T-cell (primary cell): ENCODE measurements at regions of chr11 and their contacts with region 1.

Region 1: DNA sequence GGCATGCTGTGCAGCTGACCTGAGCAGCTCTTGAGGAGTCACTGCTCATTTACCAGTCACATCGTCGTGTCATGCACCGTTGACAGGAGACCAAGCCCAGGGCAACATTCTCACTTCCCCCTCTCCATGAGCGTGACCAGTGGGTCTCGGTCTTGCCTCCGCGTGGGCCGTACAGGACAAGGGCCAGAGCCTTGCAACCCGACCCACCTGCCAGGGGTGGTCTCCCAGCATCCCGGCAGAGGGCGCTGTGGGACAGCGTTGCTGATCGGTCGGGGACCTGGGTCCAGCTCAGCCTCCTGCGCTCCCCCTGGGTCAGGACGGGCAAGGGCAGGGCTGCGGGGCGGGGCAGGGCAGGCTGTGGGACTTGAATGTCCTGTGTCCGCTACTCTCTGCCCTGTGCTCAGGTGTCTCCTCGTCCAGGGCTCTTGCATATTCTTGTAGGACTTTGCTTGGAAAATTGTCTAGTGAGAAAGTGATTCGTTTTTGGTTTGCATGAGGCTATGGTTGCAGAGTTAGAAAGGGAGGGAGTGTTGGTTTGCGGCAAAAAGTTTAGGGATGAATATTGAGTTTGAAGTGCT is 16.2 kb downstream of the EIF4G2 start:
- DNase-seq: peak; percentile 46 to 87 (median 75)
- ATAC-seq: peak; percentile 74 to 91 (median 86)
- H3K4me3 ChIP-seq: no peak overlapping the region
- H3K4me3 Mint-ChIP-seq: peak overlapping the region in 1 of 3 donors; percentile 20
- H3K27ac ChIP-seq: no peak overlapping the region
- H3K27ac Mint-ChIP-seq: no peak overlapping the region
- H3K4me1 ChIP-seq: peaks cover 0 to 20% of the 10 kb centered on the region in 2 experiments
- H3K4me1 Mint-ChIP-seq: peaks cover 23 to 30% (median 28%) of the 10 kb centered on the region in 3 donors
- H3K27me3 ChIP-seq: peaks cover 0 to 11% of the 10 kb centered on the region in 2 experiments
- H3K27me3 Mint-ChIP-seq: peaks cover 0 to 4% of the 10 kb centered on the region in 2 donors

Region 2: GRCh38 chr11:10770626-10771254 is 21.7 kb before region 1 on chr11:
- CTCF ChIA-PET with region 1: interaction called, 10 read pairs
- POLR2A ChIA-PET with region 1: no interaction called
- DNase-seq: peak in 11 of 35 experiments; percentile 5 to 45 (median 17)
- ATAC-seq: no peak
- H3K4me3 ChIP-seq: no peak overlapping the region
- H3K4me3 Mint-ChIP-seq: no peak overlapping the region
- H3K27ac ChIP-seq: no peak overlapping the region
- H3K27ac Mint-ChIP-seq: peak overlapping the region in 1 of 2 donors; percentile 48
- H3K4me1 ChIP-seq: no peaks in the 10 kb centered on the region
- H3K4me1 Mint-ChIP-seq: no peaks in the 10 kb centered on the region
- H3K27me3 ChIP-seq: no peaks in the 10 kb centered on the region
- H3K27me3 Mint-ChIP-seq: no peaks in the 10 kb centered on the region

Region 3: DNA sequence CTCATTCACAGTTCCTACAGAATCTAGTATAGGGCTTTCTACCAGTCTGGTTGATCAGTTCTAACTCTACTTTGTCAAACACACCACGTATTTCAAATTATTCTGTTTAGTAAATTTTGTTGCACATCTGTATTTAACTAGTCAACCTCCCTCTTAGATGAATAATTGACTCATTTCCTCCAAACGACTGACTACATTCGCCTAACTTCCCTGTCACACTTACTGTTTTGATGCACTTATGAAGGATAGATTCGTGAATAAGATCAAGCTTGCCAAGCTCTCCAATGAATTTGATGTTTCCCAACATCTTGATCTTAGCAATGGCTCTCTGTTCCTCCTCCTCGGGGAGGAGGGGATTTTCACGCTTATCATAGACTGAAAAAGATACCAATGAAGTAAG is 11.2 kb after region 1 on chr11:
- CTCF ChIA-PET with region 1: interaction called, 4 to 27 read pairs
- POLR2A ChIA-PET with region 1: interaction called, 30 to 57 read pairs
- DNase-seq: no peak
- ATAC-seq: no peak
- H3K4me3 ChIP-seq: no peak overlapping the region
- H3K4me3 Mint-ChIP-seq: peak overlapping the region in 2 of 3 donors; percentile 2 to 91
- H3K27ac ChIP-seq: no peak overlapping the region
- H3K27ac Mint-ChIP-seq: peak overlapping the region; percentile 25 to 29
- H3K4me1 ChIP-seq: peaks cover 34 to 44% of the 10 kb centered on the region in 2 experiments
- H3K4me1 Mint-ChIP-seq: peaks cover 79 to 85% (median 85%) of the 10 kb centered on the region in 3 donors
- H3K27me3 ChIP-seq: no peaks in the 10 kb centered on the region
- H3K27me3 Mint-ChIP-seq: no peaks in the 10 kb centered on the region

Region 4: GRCh38 chr11:10906513-10906912 is 114.0 kb after region 1 on chr11:
- CTCF ChIA-PET with region 1: interaction called, 5 to 10 read pairs
- POLR2A ChIA-PET with region 1: interaction called in 1 of 2 experiments, 4 read pairs
- DNase-seq: no peak
- ATAC-seq: no peak
- H3K4me3 ChIP-seq: no peak overlapping the region
- H3K4me3 Mint-ChIP-seq: no peak overlapping the region
- H3K27ac ChIP-seq: no peak overlapping the region
- H3K27ac Mint-ChIP-seq: no peak overlapping the region
- H3K4me1 ChIP-seq: no peaks in the 10 kb centered on the region
- H3K4me1 Mint-ChIP-seq: no peaks in the 10 kb centered on the region
- H3K27me3 ChIP-seq: peaks cover 0 to 7% of the 10 kb centered on the region in 2 experiments
- H3K27me3 Mint-ChIP-seq: peaks cover 8 to 14% of the 10 kb centered on the region in 2 donors

Region 5: GRCh38 chr11:11022125-11022730 is 229.7 kb after region 1 on chr11:
- CTCF ChIA-PET with region 1: interaction called, 5 to 18 read pairs
- POLR2A ChIA-PET with region 1: interaction called in 1 of 2 experiments, 3 read pairs
- DNase-seq: peak in 6 of 35 experiments; percentile 5 to 62 (median 10)
- ATAC-seq: peak in 1 of 4 experiments; percentile 55
- H3K4me3 ChIP-seq: no peak overlapping the region
- H3K4me3 Mint-ChIP-seq: no peak overlapping the region
- H3K27ac ChIP-seq: no peak overlapping the region
- H3K27ac Mint-ChIP-seq: no peak overlapping the region
- H3K4me1 ChIP-seq: no peaks in the 10 kb centered on the region
- H3K4me1 Mint-ChIP-seq: no peaks in the 10 kb centered on the region
- H3K27me3 ChIP-seq: no peaks in the 10 kb centered on the region
- H3K27me3 Mint-ChIP-seq: peaks cover 0 to 4% of the 10 kb centered on the region in 2 donors

Region 6: GRCh38 chr11:11135820-11136465 is 343.5 kb after region 1 on chr11:
- CTCF ChIA-PET with region 1: no interaction called
- POLR2A ChIA-PET with region 1: interaction called in 1 of 2 experiments, 13 read pairs
- DNase-seq: no peak
- ATAC-seq: no peak
- H3K4me3 ChIP-seq: no peak overlapping the region
- H3K4me3 Mint-ChIP-seq: no peak overlapping the region
- H3K27ac ChIP-seq: no peak overlapping the region
- H3K27ac Mint-ChIP-seq: no peak overlapping the region
- H3K4me1 ChIP-seq: peaks cover 6 to 8% of the 10 kb centered on the region in 2 experiments
- H3K4me1 Mint-ChIP-seq: peaks cover 21 to 25% (median 24%) of the 10 kb centered on the region in 3 donors
- H3K27me3 ChIP-seq: no peaks in the 10 kb centered on the region
- H3K27me3 Mint-ChIP-seq: peaks cover 0 to 5% of the 10 kb centered on the region in 2 donors

Region 7: GRCh38 chr11:11735586-11735985 is 943.1 kb after region 1 on chr11:
- CTCF ChIA-PET with region 1: no interaction called
- POLR2A ChIA-PET with region 1: no interaction called
- DNase-seq: no peak
- ATAC-seq: no peak
- H3K4me3 ChIP-seq: no peak overlapping the region
- H3K4me3 Mint-ChIP-seq: no peak overlapping the region
- H3K27ac ChIP-seq: no peak overlapping the region
- H3K27ac Mint-ChIP-seq: no peak overlapping the region
- H3K4me1 ChIP-seq: no peaks in the 10 kb centered on the region
- H3K4me1 Mint-ChIP-seq: no peaks in the 10 kb centered on the region
- H3K27me3 ChIP-seq: peaks cover 0 to 10% of the 10 kb centered on the region in 2 experiments
- H3K27me3 Mint-ChIP-seq: peaks cover 17 to 22% of the 10 kb centered on the region in 2 donors

Region 8: GRCh38 chr11:11787305-11788062 is 995.0 kb after region 1 on chr11:
- CTCF ChIA-PET with region 1: interaction called, 6 to 11 read pairs
- POLR2A ChIA-PET with region 1: no interaction called
- DNase-seq: peak; percentile 32 to 81 (median 63)
- ATAC-seq: peak; percentile 70 to 85 (median 78)
- H3K4me3 ChIP-seq: no peak overlapping the region
- H3K4me3 Mint-ChIP-seq: no peak overlapping the region
- H3K27ac ChIP-seq: no peak overlapping the region
- H3K27ac Mint-ChIP-seq: no peak overlapping the region
- H3K4me1 ChIP-seq: no peaks in the 10 kb centered on the region
- H3K4me1 Mint-ChIP-seq: no peaks in the 10 kb centered on the region
- H3K27me3 ChIP-seq: peaks cover 0 to 9% of the 10 kb centered on the region in 2 experiments
- H3K27me3 Mint-ChIP-seq: peaks cover 6 to 7% of the 10 kb centered on the region in 2 donors